ENCODE measurements at regions of chr14 and their contacts with region 1.

Region 1: DNA sequence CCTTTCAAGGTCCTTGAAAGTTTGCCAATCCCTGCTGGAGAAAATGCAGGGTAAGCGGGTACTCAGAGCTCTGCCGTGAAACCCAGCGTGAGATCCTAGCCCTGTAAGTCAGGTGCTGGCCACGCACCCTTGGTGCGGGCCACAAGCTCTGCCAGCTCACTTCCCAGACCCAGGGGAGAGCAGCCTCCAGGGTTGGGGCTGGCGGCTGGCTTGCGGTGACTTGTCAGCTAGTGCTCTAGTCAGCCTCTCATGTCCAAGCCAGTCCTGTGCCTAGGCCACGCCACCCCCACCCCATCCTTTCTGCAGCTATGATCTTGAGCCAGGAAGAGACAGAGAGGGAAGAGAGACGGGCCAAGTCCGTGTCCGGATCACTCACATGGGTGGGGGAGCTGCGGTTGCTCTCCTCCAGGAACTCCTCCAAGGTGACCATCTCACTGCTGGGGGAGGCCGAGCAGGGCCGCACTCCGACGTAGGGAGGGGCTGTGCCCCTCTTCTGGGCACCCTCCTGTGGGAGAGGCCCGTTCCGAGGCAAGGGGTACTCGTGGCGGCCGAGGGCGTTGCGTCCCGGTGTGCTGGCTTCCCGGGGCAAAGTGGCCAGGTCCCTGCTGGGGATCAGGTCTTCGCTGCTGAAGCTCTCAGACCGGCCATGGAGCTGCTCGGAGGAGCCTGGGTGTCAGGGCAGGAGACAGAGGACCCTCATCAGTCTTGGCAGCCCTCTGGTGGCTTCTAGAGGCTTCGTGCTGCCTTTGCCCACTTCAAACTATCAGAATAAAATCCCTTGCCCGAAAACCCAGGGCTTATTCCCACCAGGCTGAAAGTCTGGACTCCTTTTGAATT is 33.3 kb upstream of the GPR68 start:
- DNase-seq: peak; percentile 28
- H3K27ac ChIP-seq: peak overlapping the region; percentile 94
- CTCF ChIP-seq: no peak

Region 2: DNA sequence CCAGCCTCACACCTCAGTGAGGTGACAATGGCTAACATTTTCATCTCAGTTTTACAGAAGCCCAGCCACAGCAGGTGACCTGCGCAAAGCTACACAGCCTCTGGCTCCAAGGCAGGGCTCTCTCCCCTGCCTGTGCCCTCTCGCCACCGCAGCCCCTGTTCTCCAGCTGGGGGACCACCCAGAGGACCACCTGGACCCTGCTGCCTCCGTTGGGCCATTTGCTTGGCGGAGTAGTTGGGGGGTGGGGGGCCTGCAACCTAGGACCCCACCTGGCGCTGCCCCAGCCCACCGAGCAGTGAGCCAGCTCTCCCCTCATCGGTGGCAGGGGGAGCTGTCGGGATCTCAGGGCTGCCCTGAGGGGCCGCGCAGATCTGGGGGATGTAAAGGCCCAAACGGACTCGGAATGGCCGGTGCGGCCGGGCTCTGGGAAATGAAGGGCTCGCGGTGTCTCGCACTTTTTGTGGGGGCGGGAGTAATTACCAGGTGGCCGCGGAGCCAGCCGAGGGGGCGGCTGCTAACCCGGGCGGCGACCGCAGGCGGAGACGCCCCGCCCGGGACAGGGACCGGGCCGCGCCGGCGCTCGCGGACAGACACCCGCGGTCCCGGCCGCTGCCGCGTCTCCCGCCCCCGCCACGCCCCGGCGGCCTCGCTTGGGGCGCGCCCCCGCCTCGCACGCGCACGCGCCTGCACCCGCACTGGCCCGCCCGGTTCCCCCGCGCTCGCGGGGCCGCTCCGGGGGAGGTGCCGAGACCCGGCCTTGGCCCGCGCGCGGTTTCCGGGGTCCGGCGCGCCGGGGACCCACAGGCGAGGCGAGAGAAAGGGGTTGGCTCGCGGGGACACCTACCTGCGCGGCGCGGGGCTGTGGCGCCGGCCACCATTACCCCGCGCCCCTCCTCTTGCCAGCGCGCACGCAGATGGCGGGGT is 24.6 kb before region 1 on chr14:
- CTCF ChIA-PET with region 1: no interaction called
- POLR2A ChIA-PET with region 1: no interaction called
- DNase-seq: peak; percentile 31
- H3K27ac ChIP-seq: peak overlapping the region; percentile 87
- CTCF ChIP-seq: no peak

Region 3: GRCh38 chr14:91299121-91300115 is 21.7 kb after region 1 on chr14:
- CTCF ChIA-PET with region 1: no interaction called
- POLR2A ChIA-PET with region 1: no interaction called
- DNase-seq: no peak
- H3K27ac ChIP-seq: peak overlapping the region; percentile 12
- CTCF ChIP-seq: no peak

Region 4: GRCh38 chr14:91387169-91387835 is 109.5 kb after region 1 on chr14:
- CTCF ChIA-PET with region 1: no interaction called
- POLR2A ChIA-PET with region 1: interaction called, 13 read pairs
- DNase-seq: no peak
- H3K27ac ChIP-seq: peak overlapping the region; percentile 68
- CTCF ChIP-seq: no peak

Measured in RWPE1 (cell line).